Activated CD4-positive, alpha-beta T cell treated with anti-CD3 and anti-CD28 coated beads for 36 hours (primary cell): ENCODE measurements at regions of chr10 and their contacts with region 1.

Region 1: GRCh38 chr10:101569838-101570766 is 18.0 kb downstream of the POLL start:
- DNase-seq: peak; percentile 91
- ATAC-seq: peak; percentile 79
- H3K4me3 Mint-ChIP-seq: peak overlapping the region; percentile 62
- H3K27ac Mint-ChIP-seq: no peak overlapping the region
- H3K4me1 Mint-ChIP-seq: peaks cover 18% of the 10 kb centered on the region
- H3K27me3 Mint-ChIP-seq: peaks cover 40% of the 10 kb centered on the region

Region 2: DNA sequence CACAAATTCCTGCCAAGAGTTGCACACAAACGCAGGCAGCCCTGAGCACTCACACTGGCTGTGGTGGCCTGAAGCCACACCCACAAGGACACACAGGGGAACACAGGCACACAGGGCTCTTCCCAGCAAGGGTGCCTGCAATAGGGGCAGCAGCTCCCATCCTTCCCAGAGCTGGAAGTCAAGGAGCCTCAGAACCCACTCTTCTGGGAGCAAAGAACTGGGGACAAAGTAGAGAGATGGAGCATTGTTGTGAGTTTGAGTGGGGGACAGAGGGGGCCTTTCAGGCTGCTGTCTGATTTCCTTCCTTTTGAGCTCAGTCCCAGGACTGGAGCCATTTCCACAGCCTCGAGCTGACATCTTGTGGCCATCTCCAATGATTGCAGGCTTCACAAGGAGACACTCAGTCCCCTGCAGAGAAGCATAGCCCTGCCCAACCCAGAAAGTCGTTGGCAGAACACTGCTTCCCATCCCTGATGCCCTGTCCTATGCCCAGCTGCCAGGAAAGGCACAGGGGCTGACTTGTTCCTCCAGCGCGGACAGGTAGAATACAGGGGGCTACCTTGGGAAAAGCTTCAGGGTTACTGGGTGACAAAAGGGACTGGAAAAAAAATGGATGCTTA is 691.7 kb before region 1 on chr10:
- CTCF ChIA-PET with region 1: no interaction called
- POLR2A ChIA-PET with region 1: no interaction called
- intact Hi-C with region 1: no loop called
- DNase-seq: peak; percentile 63
- ATAC-seq: peak; percentile 86
- H3K4me3 Mint-ChIP-seq: no peak overlapping the region
- H3K27ac Mint-ChIP-seq: no peak overlapping the region
- H3K4me1 Mint-ChIP-seq: peaks cover 4% of the 10 kb centered on the region
- H3K27me3 Mint-ChIP-seq: peaks cover 7% of the 10 kb centered on the region

Region 3: GRCh38 chr10:101161494-101162299 is 408.4 kb before region 1 on chr10:
- CTCF ChIA-PET with region 1: no interaction called
- POLR2A ChIA-PET with region 1: no interaction called
- intact Hi-C with region 1: loop called in 1 of 2 experiments (anchors 1 kb)
- DNase-seq: peak; percentile 85
- ATAC-seq: peak; percentile 83
- H3K4me3 Mint-ChIP-seq: no peak overlapping the region
- H3K27ac Mint-ChIP-seq: no peak overlapping the region
- H3K4me1 Mint-ChIP-seq: peaks cover 10% of the 10 kb centered on the region
- H3K27me3 Mint-ChIP-seq: peaks cover 54% of the 10 kb centered on the region

Region 4: GRCh38 chr10:101272229-101272868 is 297.8 kb before region 1 on chr10:
- CTCF ChIA-PET with region 1: interaction called, 10 read pairs
- POLR2A ChIA-PET with region 1: no interaction called
- intact Hi-C with region 1: loop called (anchors 1 to 5 kb)
- DNase-seq: peak; percentile 78
- ATAC-seq: peak; percentile 91
- H3K4me3 Mint-ChIP-seq: no peak overlapping the region
- H3K27ac Mint-ChIP-seq: no peak overlapping the region
- H3K4me1 Mint-ChIP-seq: peaks cover 2% of the 10 kb centered on the region
- H3K27me3 Mint-ChIP-seq: peaks cover 23% of the 10 kb centered on the region

Region 5: GRCh38 chr10:101297901-101298486 is 272.1 kb before region 1 on chr10:
- CTCF ChIA-PET with region 1: interaction called, 4 read pairs
- POLR2A ChIA-PET with region 1: no interaction called
- intact Hi-C with region 1: loop called in 1 of 2 experiments (anchors 1 kb)
- DNase-seq: peak; percentile 89
- ATAC-seq: peak; percentile 90
- H3K4me3 Mint-ChIP-seq: no peak overlapping the region
- H3K27ac Mint-ChIP-seq: no peak overlapping the region
- H3K4me1 Mint-ChIP-seq: peaks cover 2% of the 10 kb centered on the region
- H3K27me3 Mint-ChIP-seq: peaks cover 41% of the 10 kb centered on the region

Region 6: DNA sequence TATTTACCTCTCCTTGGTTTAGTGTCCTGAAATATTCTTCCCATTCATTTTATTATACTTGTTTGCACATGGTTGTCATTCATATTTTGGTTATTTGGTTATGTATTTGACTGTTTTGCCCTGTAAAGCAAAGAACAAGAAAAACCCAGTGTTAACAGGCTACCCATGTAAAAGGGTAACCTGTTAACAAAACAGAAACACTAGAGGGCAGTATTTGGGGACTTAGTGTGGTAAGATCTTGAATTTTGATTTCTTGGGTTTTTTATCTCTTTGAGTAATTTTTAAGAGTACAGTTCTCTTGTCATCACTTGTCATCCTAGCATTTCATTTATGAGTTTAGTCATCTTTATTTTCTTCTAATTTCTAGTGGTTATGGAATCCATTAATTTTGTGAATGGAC is 33.3 kb before region 1 on chr10:
- CTCF ChIA-PET with region 1: interaction called, 20 read pairs
- POLR2A ChIA-PET with region 1: no interaction called
- intact Hi-C with region 1: loop called (anchors 1 kb)
- DNase-seq: no peak
- ATAC-seq: peak; percentile 23
- H3K4me3 Mint-ChIP-seq: no peak overlapping the region
- H3K27ac Mint-ChIP-seq: no peak overlapping the region
- H3K4me1 Mint-ChIP-seq: no peaks in the 10 kb centered on the region
- H3K27me3 Mint-ChIP-seq: no peaks in the 10 kb centered on the region